GM12878 (cell line): ENCODE measurements at regions of chr15 and their contacts with region 1.

Region 1: DNA sequence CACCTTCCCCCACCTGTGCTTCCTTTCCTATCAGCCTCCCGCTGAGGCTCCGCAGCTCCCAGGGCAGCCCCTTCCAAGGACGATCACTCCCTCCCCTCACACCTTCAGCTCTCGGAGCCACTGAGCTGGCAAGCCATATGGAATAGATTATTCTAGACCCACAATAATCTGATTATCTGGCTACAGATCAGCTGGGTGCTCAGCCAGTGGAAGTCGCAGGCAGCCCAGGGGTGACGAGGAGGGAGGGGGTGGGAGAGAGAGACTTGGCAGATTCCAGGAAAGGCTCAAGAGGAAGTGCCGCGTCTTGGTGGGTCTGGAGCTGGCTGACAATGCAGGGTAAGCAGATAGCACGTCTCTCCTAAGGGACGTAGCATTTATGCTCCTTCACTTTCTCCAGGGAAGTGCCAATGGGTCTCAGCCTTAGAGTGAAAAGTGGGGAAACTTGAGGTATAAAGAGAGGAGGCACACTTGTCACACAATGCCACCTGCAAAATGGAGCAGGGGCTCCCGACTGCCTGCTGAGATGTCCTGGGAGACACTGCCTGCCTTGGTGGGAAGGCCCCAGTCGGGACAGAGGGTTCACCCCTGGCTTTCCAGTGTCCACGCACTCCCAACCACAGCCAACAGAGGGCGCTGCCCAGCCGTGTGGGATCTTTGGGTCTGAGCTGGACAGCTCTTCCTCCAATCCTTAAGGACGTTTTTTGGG is 9.4 kb upstream of the MESP1 start:
- DNase-seq: no peak
- ATAC-seq: peak; percentile 97
- H3K4me3 ChIP-seq: no peak overlapping the region
- H3K27ac ChIP-seq: no peak overlapping the region
- H3K4me1 ChIP-seq: peaks cover 11% of the 10 kb centered on the region
- H3K27me3 ChIP-seq: no peaks in the 10 kb centered on the region
- CTCF ChIP-seq: peak; percentile 93 to 97 (median 97)
- EP300 ChIP-seq: no peak
- POLR2A ChIP-seq: no peak
- RAD21 ChIP-seq: peak; percentile 94

Region 2: DNA sequence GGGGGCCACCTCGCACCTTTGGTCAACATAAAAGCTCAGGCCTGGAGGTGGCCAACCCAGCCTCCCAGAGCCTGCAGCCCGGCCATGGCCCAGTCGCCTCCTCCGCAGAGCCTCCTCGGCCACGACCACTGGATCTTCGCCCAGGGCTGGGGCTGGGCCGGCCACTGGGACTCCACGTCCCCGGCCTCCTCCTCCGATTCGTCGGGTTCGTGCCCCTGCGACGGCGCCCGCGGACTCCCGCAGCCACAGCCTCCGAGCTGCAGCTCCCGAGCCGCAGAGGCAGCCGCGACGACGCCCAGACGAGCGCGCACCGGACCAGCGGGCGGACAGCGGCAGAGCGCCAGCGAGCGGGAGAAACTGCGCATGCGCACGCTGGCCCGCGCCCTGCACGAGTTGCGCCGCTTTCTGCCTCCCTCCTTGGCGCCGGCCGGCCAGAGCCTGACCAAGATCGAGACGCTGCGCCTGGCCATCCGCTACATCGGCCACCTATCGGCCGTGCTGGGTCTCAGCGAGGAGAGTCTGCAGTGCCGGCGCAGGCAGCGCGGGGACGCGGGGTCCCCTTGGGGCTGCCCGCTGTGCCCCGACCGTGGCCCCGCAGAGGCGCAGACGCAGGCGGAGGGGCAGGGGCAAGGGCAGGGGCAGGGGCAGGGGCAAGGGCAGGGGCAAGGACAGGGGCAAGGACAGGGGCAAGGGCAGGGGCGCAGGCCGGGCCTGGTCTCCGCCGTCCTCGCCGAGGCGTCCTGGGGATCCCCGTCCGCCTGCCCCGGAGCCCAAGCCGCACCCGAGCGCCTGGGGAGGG is 16.0 kb after region 1 on chr15 and contains the start of gene MESP2:
- CTCF ChIA-PET with region 1: interaction called, 40 read pairs
- POLR2A ChIA-PET with region 1: interaction called, 3 read pairs
- RAD21 ChIA-PET with region 1: interaction called, 9 read pairs
- SMC1A ChIA-PET with region 1: interaction called, 5 read pairs
- in situ Hi-C with region 1: no loop called
- intact Hi-C with region 1: no loop called
- DNase-seq: no peak
- ATAC-seq: peak; percentile 88
- H3K4me3 ChIP-seq: peak within 1 kb of the TSS; percentile 57; the same call in 1 of the 2 replicates
- H3K27ac ChIP-seq: no peak within 1 kb of the TSS
- H3K4me1 ChIP-seq: peaks cover 21% of the 10 kb centered on the region
- H3K27me3 ChIP-seq: no peaks in the 10 kb centered on the region
- CTCF ChIP-seq: peak; percentile 8 to 33 (median 12); a peak in 3 of 6 replicates
- EP300 ChIP-seq: no peak
- POLR2A ChIP-seq: no peak
- RAD21 ChIP-seq: no peak
- polyA plus RNA-seq, gene MESP2: not detected

Region 3: DNA sequence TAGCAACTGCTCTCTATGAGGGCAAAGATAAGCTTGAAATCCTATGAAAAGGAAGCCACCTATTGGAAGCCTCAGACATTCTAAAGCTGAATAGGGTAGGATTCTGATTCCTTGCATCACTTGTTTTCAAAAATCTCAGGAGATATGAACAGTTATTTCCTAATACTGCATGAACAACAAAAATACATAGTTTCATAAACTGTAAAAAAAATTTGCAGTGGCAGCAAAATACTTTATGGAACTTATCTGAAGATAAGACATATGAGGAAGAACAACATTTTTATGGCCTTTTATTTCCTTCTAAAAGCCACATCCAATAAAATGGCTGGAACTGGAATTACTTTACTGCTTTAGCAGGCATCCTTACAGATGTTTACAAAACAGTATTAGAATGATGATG is 103.5 kb after region 1 on chr15:
- CTCF ChIA-PET with region 1: interaction called, 14 read pairs
- POLR2A ChIA-PET with region 1: no interaction called
- RAD21 ChIA-PET with region 1: interaction called, 3 read pairs
- SMC1A ChIA-PET with region 1: interaction called, 6 read pairs
- in situ Hi-C with region 1: no loop called
- intact Hi-C with region 1: no loop called
- DNase-seq: no peak
- ATAC-seq: no peak
- H3K4me3 ChIP-seq: no peak overlapping the region
- H3K27ac ChIP-seq: no peak overlapping the region
- H3K4me1 ChIP-seq: peaks cover 14% of the 10 kb centered on the region
- H3K27me3 ChIP-seq: no peaks in the 10 kb centered on the region
- CTCF ChIP-seq: no peak
- EP300 ChIP-seq: no peak
- POLR2A ChIP-seq: no peak
- RAD21 ChIP-seq: no peak

Region 4: GRCh38 chr15:89971592-89971997 is 211.1 kb after region 1 on chr15:
- CTCF ChIA-PET with region 1: interaction called, 20 read pairs
- POLR2A ChIA-PET with region 1: no interaction called
- RAD21 ChIA-PET with region 1: interaction called, 4 read pairs
- SMC1A ChIA-PET with region 1: interaction called, 3 read pairs
- in situ Hi-C with region 1: no loop called
- intact Hi-C with region 1: loop called (anchors 5 kb)
- DNase-seq: peak; percentile 11
- ATAC-seq: peak; percentile 100
- H3K4me3 ChIP-seq: no peak overlapping the region
- H3K27ac ChIP-seq: no peak overlapping the region
- H3K4me1 ChIP-seq: no peaks in the 10 kb centered on the region
- H3K27me3 ChIP-seq: no peaks in the 10 kb centered on the region
- CTCF ChIP-seq: peak; percentile 74 to 86 (median 86)
- EP300 ChIP-seq: no peak
- POLR2A ChIP-seq: no peak
- RAD21 ChIP-seq: peak; percentile 54

Region 5: GRCh38 chr15:90086868-90087268 is 326.4 kb after region 1 on chr15:
- CTCF ChIA-PET with region 1: interaction called, 8 read pairs
- POLR2A ChIA-PET with region 1: no interaction called
- RAD21 ChIA-PET with region 1: interaction called, 6 read pairs
- SMC1A ChIA-PET with region 1: no interaction called
- in situ Hi-C with region 1: loop called (anchors 10 kb)
- intact Hi-C with region 1: loop called (anchors 10 kb)
- DNase-seq: no peak
- ATAC-seq: peak; percentile 88
- H3K4me3 ChIP-seq: no peak overlapping the region
- H3K27ac ChIP-seq: no peak overlapping the region
- H3K4me1 ChIP-seq: no peaks in the 10 kb centered on the region
- H3K27me3 ChIP-seq: no peaks in the 10 kb centered on the region
- CTCF ChIP-seq: peak; percentile 79 to 87 (median 86)
- EP300 ChIP-seq: no peak
- POLR2A ChIP-seq: no peak
- RAD21 ChIP-seq: peak; percentile 79